ENCODE measurements at regions of chr4 and their contacts with region 1.

Region 1: GRCh38 chr4:82428969-82429727 is 1.1 kb downstream of the HNRNPDL start:
- DNase-seq: peak; percentile 82 to 98 (median 90)
- ATAC-seq: peak; percentile 56 to 74 (median 64)
- H3K4me3 ChIP-seq: peak overlapping the region; percentile 92 to 99
- H3K4me3 Mint-ChIP-seq: peak overlapping the region; percentile 98 to 99 (median 99)
- H3K27ac ChIP-seq: peak overlapping the region; percentile 100
- H3K27ac Mint-ChIP-seq: peak overlapping the region; percentile 97 to 98
- H3K4me1 ChIP-seq: peaks cover 23 to 31% of the 10 kb centered on the region in 2 experiments
- H3K4me1 Mint-ChIP-seq: peaks cover 63 to 74% (median 70%) of the 10 kb centered on the region in 3 donors
- H3K27me3 ChIP-seq: no peaks in the 10 kb centered on the region
- H3K27me3 Mint-ChIP-seq: no peaks in the 10 kb centered on the region

Region 2: GRCh38 chr4:82360298-82361177 is 68.6 kb before region 1 on chr4:
- CTCF ChIA-PET with region 1: interaction called in 1 of 2 experiments, 19 read pairs
- POLR2A ChIA-PET with region 1: interaction called in 1 of 2 experiments, 9 read pairs
- DNase-seq: peak in 2 of 35 experiments; percentile 31 to 56
- ATAC-seq: peak; percentile 59 to 69 (median 66)
- H3K4me3 ChIP-seq: no peak overlapping the region
- H3K4me3 Mint-ChIP-seq: peak overlapping the region in 1 of 3 donors; percentile 32
- H3K27ac ChIP-seq: peak overlapping the region; percentile 6
- H3K27ac Mint-ChIP-seq: no peak overlapping the region
- H3K4me1 ChIP-seq: peaks cover 24 to 56% of the 10 kb centered on the region in 2 experiments
- H3K4me1 Mint-ChIP-seq: peaks cover 87 to 91% (median 91%) of the 10 kb centered on the region in 3 donors
- H3K27me3 ChIP-seq: no peaks in the 10 kb centered on the region
- H3K27me3 Mint-ChIP-seq: no peaks in the 10 kb centered on the region

Region 3: GRCh38 chr4:82373816-82374625 is 55.1 kb before region 1 on chr4 and contains the start of gene HNRNPD:
- CTCF ChIA-PET with region 1: interaction called in 1 of 2 experiments, 14 read pairs
- POLR2A ChIA-PET with region 1: interaction called, 3 to 22 read pairs
- DNase-seq: peak; percentile 76 to 97 (median 89)
- ATAC-seq: peak; percentile 86 to 90 (median 88)
- H3K4me3 ChIP-seq: peak within 1 kb of the TSS; percentile 90 to 94
- H3K4me3 Mint-ChIP-seq: peak within 1 kb of the TSS; percentile 91 to 99 (median 97)
- H3K27ac ChIP-seq: peak within 1 kb of the TSS; percentile 97
- H3K27ac Mint-ChIP-seq: peak within 1 kb of the TSS; percentile 99
- H3K4me1 ChIP-seq: peaks cover 22 to 35% of the 10 kb centered on the region in 2 experiments
- H3K4me1 Mint-ChIP-seq: peaks cover 49 to 66% (median 49%) of the 10 kb centered on the region in 3 donors
- H3K27me3 ChIP-seq: no peaks in the 10 kb centered on the region
- H3K27me3 Mint-ChIP-seq: no peaks in the 10 kb centered on the region
- total RNA-seq, gene HNRNPD: 193 to 274 (median 202) TPM

Region 4: GRCh38 chr4:82462415-82462831 is 33.3 kb after region 1 on chr4:
- CTCF ChIA-PET with region 1: interaction called, 8 to 10 read pairs
- POLR2A ChIA-PET with region 1: interaction called in 1 of 2 experiments, 5 read pairs
- DNase-seq: peak; percentile 53 to 90 (median 79)
- ATAC-seq: peak; percentile 82 to 95 (median 88)
- H3K4me3 ChIP-seq: no peak overlapping the region
- H3K4me3 Mint-ChIP-seq: no peak overlapping the region
- H3K27ac ChIP-seq: no peak overlapping the region
- H3K27ac Mint-ChIP-seq: no peak overlapping the region
- H3K4me1 ChIP-seq: no peaks in the 10 kb centered on the region
- H3K4me1 Mint-ChIP-seq: no peaks in the 10 kb centered on the region
- H3K27me3 ChIP-seq: no peaks in the 10 kb centered on the region
- H3K27me3 Mint-ChIP-seq: no peaks in the 10 kb centered on the region

Measured in T-cell (primary cell).